Lower lobe of right lung (tissue), 2 donors: ENCODE measurements at regions of chr3 and their contacts with region 1.

Region 1: DNA sequence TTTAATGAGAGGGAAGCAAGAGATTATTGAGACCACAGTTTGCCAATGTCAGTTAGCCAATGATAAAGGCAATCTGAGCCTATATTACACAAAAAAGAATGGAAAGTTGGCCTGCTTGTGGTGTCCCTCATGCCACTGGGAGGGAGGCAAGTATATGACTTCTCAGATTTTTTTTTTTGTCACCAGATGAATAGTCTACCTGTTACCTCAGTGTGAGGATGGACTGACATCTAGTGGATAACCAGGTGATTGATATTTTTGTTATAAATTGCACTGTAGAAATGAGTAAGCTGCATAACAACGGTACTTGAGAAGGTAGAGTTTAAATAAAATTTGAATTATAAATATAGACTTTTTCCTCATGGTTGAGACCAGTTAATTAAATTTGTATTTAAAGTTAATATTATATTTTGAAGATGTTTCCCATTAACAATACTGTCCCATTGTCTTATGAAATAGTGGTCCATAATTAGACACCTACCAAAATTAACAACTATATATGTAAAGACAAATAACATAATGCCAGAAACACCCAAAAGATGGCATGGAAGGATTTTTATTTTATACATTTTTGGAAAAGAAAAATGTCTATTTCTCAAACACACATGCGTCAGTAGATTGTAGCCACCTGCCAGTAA is 237.8 kb upstream of the GADL1 start:
- DNase-seq: no peak
- ATAC-seq: peak; percentile 64 to 76
- H3K4me3 ChIP-seq: no peak overlapping the region
- H3K27ac ChIP-seq: no peak overlapping the region
- H3K4me1 ChIP-seq: no peaks in the 10 kb centered on the region
- H3K27me3 ChIP-seq: no peaks in the 10 kb centered on the region
- CTCF ChIP-seq: peak; percentile 51

Region 2: GRCh38 chr3:30779686-30780287 is 352.5 kb before region 1 on chr3:
- intact Hi-C with region 1: loop called (anchors 10 kb)
- DNase-seq: no peak
- ATAC-seq: no peak
- H3K4me3 ChIP-seq: no peak overlapping the region
- H3K27ac ChIP-seq: no peak overlapping the region
- H3K4me1 ChIP-seq: no peaks in the 10 kb centered on the region
- H3K27me3 ChIP-seq: no peaks in the 10 kb centered on the region
- CTCF ChIP-seq: peak; percentile 38

Region 3: GRCh38 chr3:31242026-31242960 is 110.0 kb after region 1 on chr3:
- intact Hi-C with region 1: no loop called
- DNase-seq: no peak
- ATAC-seq: no peak
- H3K4me3 ChIP-seq: no peak overlapping the region
- H3K27ac ChIP-seq: no peak overlapping the region
- H3K4me1 ChIP-seq: no peaks in the 10 kb centered on the region
- H3K27me3 ChIP-seq: no peaks in the 10 kb centered on the region
- CTCF ChIP-seq: no peak